Heart left ventricle (tissue), 16 donors: ENCODE measurements at regions of chr1 and their contacts with region 1.

Region 1: GRCh38 chr1:70221241-70222121 is at the start of gene SRSF11:
- DNase-seq: peak; percentile 96 to 98 (median 97)
- ATAC-seq: peak; percentile 98 to 100 (median 100)
- H3K4me3 ChIP-seq: peak within 1 kb of the TSS; percentile 65 to 92 (median 83)
- H3K27ac ChIP-seq: peak within 1 kb of the TSS; percentile 78 to 98 (median 94)
- H3K4me1 ChIP-seq: peaks cover 0 to 56% (median 45%) of the 10 kb centered on the region in 12 donors
- H3K27me3 ChIP-seq: no peaks in the 10 kb centered on the region
- CTCF ChIP-seq: peak in 2 of 12 donors; percentile 14 to 38
- POLR2A ChIP-seq: peak in 1 of 2 donors; percentile 72
- total RNA-seq, gene SRSF11: 27.9 to 73.2 (median 53.6) TPM

Region 2: DNA sequence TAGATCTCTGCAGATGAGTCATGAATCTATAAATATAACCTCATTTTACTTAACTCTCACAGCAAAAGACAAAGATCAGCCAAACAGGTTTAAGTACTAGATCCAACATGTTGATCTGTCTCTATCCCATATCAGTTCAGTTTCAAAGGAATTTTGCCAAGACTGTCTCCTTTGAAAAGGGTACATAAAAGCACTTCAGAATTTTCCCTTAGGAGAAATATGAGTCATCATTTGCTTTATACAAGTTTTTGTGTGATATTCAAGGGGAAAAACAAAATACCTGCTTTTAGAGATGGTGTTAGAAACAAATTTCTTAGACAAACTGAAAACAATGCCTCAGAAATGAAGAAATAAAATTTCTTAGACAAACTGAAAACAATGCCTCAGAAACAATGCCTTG is 727.3 kb before region 1 on chr1:
- intact Hi-C with region 1: no loop called
- DNase-seq: no peak
- ATAC-seq: no peak
- H3K4me3 ChIP-seq: no peak overlapping the region
- H3K27ac ChIP-seq: no peak overlapping the region
- H3K4me1 ChIP-seq: no peaks in the 10 kb centered on the region
- H3K27me3 ChIP-seq: no peaks in the 10 kb centered on the region
- CTCF ChIP-seq: no peak
- POLR2A ChIP-seq: no peak

Region 3: DNA sequence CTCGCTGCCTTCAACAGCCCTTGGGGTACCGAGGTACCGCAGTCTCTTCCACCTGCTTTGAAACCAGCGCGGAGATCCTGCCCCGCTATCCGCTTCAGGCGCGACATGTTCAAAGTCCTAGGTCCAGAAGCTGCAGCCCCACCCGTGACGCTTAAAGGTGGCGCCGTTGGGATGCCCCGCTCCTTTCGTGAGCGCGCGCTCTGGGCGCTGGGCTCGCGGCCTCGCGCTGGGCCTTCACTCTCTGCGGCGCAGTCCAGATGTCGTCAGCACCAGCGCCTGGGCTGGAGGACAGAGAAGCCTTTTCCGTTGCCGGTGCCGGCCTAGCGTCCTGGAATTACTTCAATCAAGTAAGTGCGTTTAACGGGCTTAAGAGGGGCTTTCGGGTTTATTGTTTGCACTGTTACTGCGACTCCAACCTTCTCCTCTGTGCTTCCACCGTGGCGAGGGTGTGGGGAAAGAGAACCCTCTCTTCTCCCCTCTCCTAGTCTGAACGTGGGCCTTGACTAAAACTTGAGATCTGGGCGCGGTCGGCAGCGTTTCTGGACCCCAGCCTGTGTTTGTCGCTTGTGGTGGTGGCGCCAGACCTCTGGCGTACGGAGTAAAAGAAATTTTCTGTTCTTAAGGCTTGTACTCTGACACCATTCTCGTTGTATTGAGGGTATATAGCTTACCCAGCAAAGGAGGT is 15.9 kb before region 1 on chr1 and contains the start of gene LRRC40:
- intact Hi-C with region 1: loop called in 3 of 10 experiments (anchors 1 to 2 kb)
- DNase-seq: peak; percentile 96 to 97 (median 97)
- ATAC-seq: peak; percentile 97 to 100 (median 99)
- H3K4me3 ChIP-seq: peak within 1 kb of the TSS; percentile 54 to 90 (median 74)
- H3K27ac ChIP-seq: peak within 1 kb of the TSS; percentile 85 to 95 (median 89)
- H3K4me1 ChIP-seq: peaks cover 0 to 63% (median 35%) of the 10 kb centered on the region in 12 donors
- H3K27me3 ChIP-seq: no peaks in the 10 kb centered on the region
- CTCF ChIP-seq: peak in 2 of 12 donors; percentile 5 to 8
- POLR2A ChIP-seq: peak in 1 of 2 donors; percentile 75
- total RNA-seq, gene LRRC40: 8.4 to 13.0 (median 11.2) TPM

Region 4: DNA sequence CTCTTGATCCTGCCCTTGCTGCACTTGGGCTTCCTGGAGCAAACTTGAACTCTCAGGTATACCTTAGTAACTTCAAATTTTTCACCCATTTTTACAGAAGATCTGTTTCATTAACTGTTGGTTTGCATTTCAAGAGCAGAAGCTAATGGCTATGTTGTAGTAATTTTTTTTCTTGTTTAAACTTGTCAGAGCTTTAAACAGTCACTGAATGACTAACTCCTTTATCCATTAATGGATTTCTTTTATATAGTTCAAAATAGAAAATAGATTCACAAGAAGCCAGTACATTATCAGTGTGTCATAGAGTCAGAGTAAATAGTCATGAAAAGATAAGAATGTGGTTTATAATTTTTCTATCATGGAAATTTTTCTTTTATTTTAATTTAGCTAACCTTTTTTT is 13.3 kb after region 1 on chr1:
- intact Hi-C with region 1: no loop called
- DNase-seq: no peak
- ATAC-seq: no peak
- H3K4me3 ChIP-seq: no peak overlapping the region
- H3K27ac ChIP-seq: no peak overlapping the region
- H3K4me1 ChIP-seq: peaks cover 0 to 8% (median 0%) of the 10 kb centered on the region in 12 donors
- H3K27me3 ChIP-seq: no peaks in the 10 kb centered on the region
- CTCF ChIP-seq: no peak
- POLR2A ChIP-seq: no peak

Region 5: GRCh38 chr1:70354332-70355110 is 133.0 kb after region 1 on chr1 and contains the start of gene ANKRD13C:
- intact Hi-C with region 1: loop called in 5 of 10 experiments (anchors 5 to 10 kb)
- DNase-seq: peak; percentile 93 to 96 (median 95)
- ATAC-seq: peak; percentile 99
- H3K4me3 ChIP-seq: peak within 1 kb of the TSS; percentile 71 to 95 (median 86)
- H3K27ac ChIP-seq: peak within 1 kb of the TSS; percentile 78 to 96 (median 90)
- H3K4me1 ChIP-seq: peaks cover 0 to 49% (median 35%) of the 10 kb centered on the region in 12 donors
- H3K27me3 ChIP-seq: no peaks in the 10 kb centered on the region
- CTCF ChIP-seq: no peak
- POLR2A ChIP-seq: peak in 1 of 2 donors; percentile 77
- total RNA-seq, gene ANKRD13C: 8.5 to 14.8 (median 11.1) TPM

Region 6: DNA sequence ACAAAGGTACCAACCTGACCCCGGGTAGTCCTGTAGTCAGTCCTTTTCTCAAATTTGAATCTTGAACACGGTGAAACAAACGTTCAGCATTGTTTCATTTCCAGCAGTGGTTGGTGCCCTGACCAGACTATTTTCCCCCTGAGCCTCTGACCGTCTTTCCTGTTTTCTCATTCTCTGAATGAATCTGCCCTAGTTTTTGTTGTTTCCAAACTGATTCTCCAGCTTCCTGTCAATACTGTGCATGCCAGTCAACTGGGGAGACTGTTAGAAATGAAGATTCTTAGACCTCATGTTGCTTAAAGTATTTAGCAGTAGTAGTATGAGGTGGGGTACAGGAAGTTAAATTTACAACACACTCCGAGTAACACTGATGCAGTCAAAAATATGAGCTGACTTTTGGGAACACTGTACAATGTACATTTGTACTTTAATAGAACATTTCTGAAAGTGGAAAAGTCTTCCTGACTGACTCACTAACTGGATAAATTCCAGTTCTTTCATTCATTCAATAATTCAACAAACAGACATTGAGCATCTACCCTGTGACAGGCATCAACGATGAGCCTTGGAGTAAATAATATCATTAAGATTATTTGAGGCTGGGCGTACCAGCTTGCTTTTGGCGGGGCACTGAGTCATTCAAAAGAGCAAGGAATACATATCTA is 885.3 kb after region 1 on chr1:
- intact Hi-C with region 1: no loop called
- DNase-seq: no peak
- ATAC-seq: no peak
- H3K4me3 ChIP-seq: no peak overlapping the region
- H3K27ac ChIP-seq: no peak overlapping the region
- H3K4me1 ChIP-seq: no peaks in the 10 kb centered on the region
- H3K27me3 ChIP-seq: no peaks in the 10 kb centered on the region
- CTCF ChIP-seq: no peak
- POLR2A ChIP-seq: no peak